ENCODE measurements at regions of chr15 and their contacts with region 1.

Region 1: GRCh38 chr15:85116925-85117680 is 135.4 kb downstream of the PDE8A start:
- DNase-seq: no peak
- H3K4me3 ChIP-seq: no peak overlapping the region
- H3K27ac ChIP-seq: no peak overlapping the region
- H3K4me1 ChIP-seq: no peaks in the 10 kb centered on the region
- H3K27me3 ChIP-seq: no peaks in the 10 kb centered on the region
- CTCF ChIP-seq: no peak

Region 2: GRCh38 chr15:85354461-85354860 is 237.4 kb after region 1 on chr15:
- CTCF ChIA-PET with region 1: no interaction called
- POLR2A ChIA-PET with region 1: no interaction called
- intact Hi-C with region 1: no loop called
- DNase-seq: peak; percentile 43
- H3K4me3 ChIP-seq: no peak overlapping the region
- H3K27ac ChIP-seq: peak overlapping the region; percentile 48
- H3K4me1 ChIP-seq: peaks cover 16% of the 10 kb centered on the region
- H3K27me3 ChIP-seq: no peaks in the 10 kb centered on the region
- CTCF ChIP-seq: no peak

Region 3: GRCh38 chr15:85810075-85810474 is 693.0 kb after region 1 on chr15:
- CTCF ChIA-PET with region 1: no interaction called
- POLR2A ChIA-PET with region 1: interaction called, 10 read pairs
- intact Hi-C with region 1: no loop called
- DNase-seq: no peak
- H3K4me3 ChIP-seq: no peak overlapping the region
- H3K27ac ChIP-seq: no peak overlapping the region
- H3K4me1 ChIP-seq: no peaks in the 10 kb centered on the region
- H3K27me3 ChIP-seq: no peaks in the 10 kb centered on the region
- CTCF ChIP-seq: no peak

Measured in A673 (cell line).